Activated CD4-positive, alpha-beta T cell treated with anti-CD3 and anti-CD28 coated beads for 36 hours (primary cell): ENCODE measurements at regions of chr5 and their contacts with region 1.

Region 1: DNA sequence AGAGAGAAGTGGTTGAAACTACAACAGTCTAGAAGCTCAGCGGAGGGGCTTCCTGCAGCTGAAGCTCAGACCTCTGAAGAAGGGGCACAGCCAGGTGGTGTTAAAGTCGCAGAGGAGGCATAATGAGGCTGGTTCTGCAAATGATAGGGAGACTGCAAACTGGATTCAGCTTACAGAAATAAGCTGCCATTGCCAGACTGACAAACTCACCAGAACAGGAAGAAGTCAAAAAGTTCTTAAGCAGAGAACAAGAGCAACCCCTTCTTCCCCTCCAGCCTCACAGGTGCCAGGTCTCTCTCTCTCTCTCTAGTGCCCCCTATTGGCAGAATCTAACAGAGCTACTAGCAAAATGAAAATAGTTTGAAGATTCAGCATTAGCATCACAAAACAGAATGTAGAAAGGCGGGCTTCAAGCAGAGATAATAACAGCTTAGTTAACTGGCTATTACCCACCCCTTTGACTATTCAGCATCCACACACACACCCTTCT is 76.7 kb downstream of the GRAMD2B start:
- DNase-seq: peak; percentile 35
- ATAC-seq: peak; percentile 66
- H3K4me3 Mint-ChIP-seq: no peak overlapping the region
- H3K27ac Mint-ChIP-seq: no peak overlapping the region
- H3K4me1 Mint-ChIP-seq: peaks cover 31% of the 10 kb centered on the region
- H3K27me3 Mint-ChIP-seq: no peaks in the 10 kb centered on the region

Region 2: DNA sequence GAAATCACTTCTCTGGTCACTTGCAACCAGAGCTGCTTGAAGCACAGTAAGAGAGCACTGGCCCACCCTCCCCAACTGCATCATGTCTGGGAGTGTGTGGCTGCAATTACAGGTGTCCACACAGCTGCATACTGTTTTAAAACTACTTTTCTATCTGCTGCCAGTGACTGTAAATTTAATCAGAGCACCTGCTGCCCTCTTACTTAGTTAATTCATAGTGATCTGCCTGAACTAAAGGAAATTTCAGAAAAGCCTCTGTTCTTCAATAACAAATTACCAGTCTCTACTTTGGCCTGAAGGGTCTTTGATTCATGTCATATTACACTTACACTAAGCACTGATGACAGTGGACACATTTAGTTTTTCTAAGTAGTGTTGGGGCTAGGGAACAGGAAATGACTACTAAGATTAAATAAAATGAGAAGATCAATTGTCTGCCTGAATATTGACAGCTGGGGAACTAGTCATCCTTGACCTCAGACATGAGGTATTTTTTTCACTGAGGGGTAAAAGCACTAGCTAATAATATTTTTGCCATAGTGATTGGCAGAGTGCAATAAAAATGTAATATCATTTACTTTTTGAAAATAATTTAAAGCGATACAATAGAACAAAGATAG is 865.6 kb before region 1 on chr5:
- CTCF ChIA-PET with region 1: no interaction called
- POLR2A ChIA-PET with region 1: no interaction called
- intact Hi-C with region 1: no loop called
- DNase-seq: no peak
- ATAC-seq: no peak
- H3K4me3 Mint-ChIP-seq: no peak overlapping the region
- H3K27ac Mint-ChIP-seq: no peak overlapping the region
- H3K4me1 Mint-ChIP-seq: no peaks in the 10 kb centered on the region
- H3K27me3 Mint-ChIP-seq: no peaks in the 10 kb centered on the region

Region 3: DNA sequence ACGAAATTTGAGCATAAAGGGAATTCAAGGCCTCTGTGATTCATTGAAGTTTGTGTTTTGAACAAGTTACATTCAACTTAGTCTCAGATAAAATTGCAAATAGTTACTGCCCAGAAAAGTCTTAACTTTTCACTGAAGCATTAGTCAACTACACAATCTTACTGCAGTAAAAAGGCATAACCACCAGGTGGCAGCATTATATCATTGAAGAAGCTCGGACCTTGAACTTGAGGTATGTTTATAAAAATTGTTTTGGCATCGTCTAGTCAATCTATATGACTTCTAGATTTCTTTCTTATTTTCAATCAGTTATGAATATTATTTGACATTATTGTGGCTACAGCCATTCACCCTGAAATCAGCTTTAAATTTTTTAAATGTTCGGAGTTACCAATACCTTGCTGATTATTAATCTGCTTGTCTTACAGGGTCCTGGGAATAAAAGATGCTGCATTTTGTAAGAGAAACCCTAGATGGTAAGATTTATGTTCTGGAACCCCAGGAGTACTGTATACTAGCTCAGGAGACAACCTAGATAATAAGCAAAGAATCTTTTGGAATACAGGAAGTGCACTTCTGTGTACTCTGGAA is 160.6 kb before region 1 on chr5:
- CTCF ChIA-PET with region 1: interaction called, 37 read pairs
- POLR2A ChIA-PET with region 1: no interaction called
- intact Hi-C with region 1: no loop called
- DNase-seq: peak; percentile 64
- ATAC-seq: peak; percentile 53
- H3K4me3 Mint-ChIP-seq: no peak overlapping the region
- H3K27ac Mint-ChIP-seq: no peak overlapping the region
- H3K4me1 Mint-ChIP-seq: no peaks in the 10 kb centered on the region
- H3K27me3 Mint-ChIP-seq: peaks cover 6% of the 10 kb centered on the region

Region 4: GRCh38 chr5:126354012-126354857 is 145.7 kb before region 1 on chr5:
- CTCF ChIA-PET with region 1: interaction called, 33 read pairs
- POLR2A ChIA-PET with region 1: no interaction called
- intact Hi-C with region 1: loop called (anchors 1 to 2 kb)
- DNase-seq: no peak
- ATAC-seq: peak; percentile 71
- H3K4me3 Mint-ChIP-seq: peak overlapping the region; percentile 34
- H3K27ac Mint-ChIP-seq: peak overlapping the region; percentile 55
- H3K4me1 Mint-ChIP-seq: peaks cover 12% of the 10 kb centered on the region
- H3K27me3 Mint-ChIP-seq: no peaks in the 10 kb centered on the region

Region 5: DNA sequence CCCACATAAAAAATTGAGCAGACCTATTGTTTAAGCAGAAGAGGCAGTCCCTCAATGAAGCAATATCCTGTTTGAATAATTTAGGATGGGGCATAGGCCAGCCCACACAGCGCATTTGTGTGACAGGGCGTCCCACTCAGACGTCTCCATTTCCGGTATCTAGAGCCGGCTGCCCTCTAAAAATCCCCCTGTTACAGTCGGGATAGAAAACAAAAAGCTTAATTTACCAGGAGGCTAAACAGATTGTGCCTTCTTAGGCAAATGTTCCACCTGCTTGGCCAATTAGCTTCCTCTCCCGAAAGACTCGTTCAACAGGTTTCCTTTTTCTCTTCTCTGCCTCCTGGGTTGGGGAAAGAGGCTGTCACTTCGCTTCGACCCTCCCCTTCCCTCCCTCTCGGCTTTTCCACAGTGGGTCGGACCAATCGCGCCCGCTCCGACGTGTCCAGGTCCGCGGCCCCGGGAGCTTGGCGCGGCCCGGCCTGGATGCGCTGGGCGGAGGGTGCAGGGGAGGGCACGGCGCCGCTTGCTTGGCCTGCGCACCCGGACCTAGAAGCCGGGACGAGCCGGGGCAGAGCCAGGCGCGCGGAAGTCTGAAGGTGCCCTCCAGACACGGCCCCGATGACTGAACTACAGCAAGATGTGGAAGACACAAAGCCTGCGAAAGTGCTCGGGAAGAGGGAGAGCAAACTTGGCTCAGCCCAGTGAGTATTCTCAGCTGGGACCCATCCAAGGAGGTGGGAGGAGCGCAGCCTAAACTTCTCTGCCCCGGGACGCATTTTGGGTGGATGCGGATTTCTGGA is 76.7 kb before region 1 on chr5 and contains the start of gene GRAMD2B:
- CTCF ChIA-PET with region 1: interaction called, 9 read pairs
- POLR2A ChIA-PET with region 1: no interaction called
- intact Hi-C with region 1: loop called (anchors 2 to 5 kb)
- DNase-seq: peak; percentile 82
- ATAC-seq: peak; percentile 86
- H3K4me3 Mint-ChIP-seq: peak within 1 kb of the TSS; percentile 87
- H3K27ac Mint-ChIP-seq: peak within 1 kb of the TSS; percentile 90
- H3K4me1 Mint-ChIP-seq: peaks cover 40% of the 10 kb centered on the region
- H3K27me3 Mint-ChIP-seq: no peaks in the 10 kb centered on the region
- total RNA-seq, gene GRAMD2B: 9.7 to 13.9 TPM

Region 6: DNA sequence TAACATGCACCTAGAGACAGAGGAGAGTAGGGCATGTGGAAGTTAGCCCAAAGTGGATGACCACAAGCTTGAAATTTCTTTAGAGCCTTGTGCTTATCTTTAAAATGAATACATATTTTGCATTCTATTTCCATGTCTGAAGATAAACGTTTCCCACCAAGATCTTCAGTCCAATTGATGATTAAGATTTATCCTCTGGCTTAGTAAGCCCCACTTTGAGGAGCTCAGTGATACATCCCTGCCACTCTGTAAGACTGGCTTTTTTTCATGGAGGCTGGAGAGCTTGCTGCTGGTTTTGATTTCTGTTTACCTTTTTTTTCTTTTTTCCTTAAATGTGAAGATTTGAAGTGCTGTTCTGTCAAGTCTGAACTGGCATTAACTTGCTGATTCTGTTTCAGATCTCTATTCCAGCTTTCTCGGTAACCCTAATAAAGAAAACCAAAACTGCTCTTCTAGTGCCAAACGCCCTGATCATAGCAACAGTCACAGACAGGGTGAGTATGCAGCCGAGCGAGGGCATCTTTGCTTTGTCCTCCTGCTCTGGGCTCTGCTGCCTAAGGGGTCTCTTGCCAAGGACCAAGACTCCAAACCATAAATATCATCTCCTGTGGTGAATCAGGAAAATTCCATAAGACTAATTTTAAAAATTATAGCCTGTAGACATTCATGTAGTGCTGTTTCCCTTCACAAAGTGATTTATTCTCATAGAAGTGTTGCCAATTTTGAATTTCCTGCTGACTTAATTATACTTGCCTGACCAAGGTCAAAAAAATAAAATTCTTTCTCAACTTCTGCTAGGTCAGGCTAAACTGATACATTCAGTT is 22.4 kb before region 1 on chr5:
- CTCF ChIA-PET with region 1: interaction called, 14 read pairs
- POLR2A ChIA-PET with region 1: interaction called, 4 read pairs
- intact Hi-C with region 1: no loop called
- DNase-seq: no peak
- ATAC-seq: no peak
- H3K4me3 Mint-ChIP-seq: no peak overlapping the region
- H3K27ac Mint-ChIP-seq: no peak overlapping the region
- H3K4me1 Mint-ChIP-seq: peaks cover 2% of the 10 kb centered on the region
- H3K27me3 Mint-ChIP-seq: no peaks in the 10 kb centered on the region

Region 7: GRCh38 chr5:126519634-126520592 is 20.0 kb after region 1 on chr5:
- CTCF ChIA-PET with region 1: interaction called, 19 read pairs
- POLR2A ChIA-PET with region 1: no interaction called
- intact Hi-C with region 1: no loop called
- DNase-seq: no peak
- ATAC-seq: no peak
- H3K4me3 Mint-ChIP-seq: no peak overlapping the region
- H3K27ac Mint-ChIP-seq: no peak overlapping the region
- H3K4me1 Mint-ChIP-seq: no peaks in the 10 kb centered on the region
- H3K27me3 Mint-ChIP-seq: no peaks in the 10 kb centered on the region

Region 8: GRCh38 chr5:126536874-126537273 is 37.0 kb after region 1 on chr5:
- CTCF ChIA-PET with region 1: interaction called, 13 read pairs
- POLR2A ChIA-PET with region 1: no interaction called
- intact Hi-C with region 1: loop called (anchors 2 to 5 kb)
- DNase-seq: no peak
- ATAC-seq: no peak
- H3K4me3 Mint-ChIP-seq: no peak overlapping the region
- H3K27ac Mint-ChIP-seq: no peak overlapping the region
- H3K4me1 Mint-ChIP-seq: no peaks in the 10 kb centered on the region
- H3K27me3 Mint-ChIP-seq: no peaks in the 10 kb centered on the region